Breast epithelium (tissue), 4 donors: ENCODE measurements at regions of chr14 and their contacts with region 1.

Region 1: DNA sequence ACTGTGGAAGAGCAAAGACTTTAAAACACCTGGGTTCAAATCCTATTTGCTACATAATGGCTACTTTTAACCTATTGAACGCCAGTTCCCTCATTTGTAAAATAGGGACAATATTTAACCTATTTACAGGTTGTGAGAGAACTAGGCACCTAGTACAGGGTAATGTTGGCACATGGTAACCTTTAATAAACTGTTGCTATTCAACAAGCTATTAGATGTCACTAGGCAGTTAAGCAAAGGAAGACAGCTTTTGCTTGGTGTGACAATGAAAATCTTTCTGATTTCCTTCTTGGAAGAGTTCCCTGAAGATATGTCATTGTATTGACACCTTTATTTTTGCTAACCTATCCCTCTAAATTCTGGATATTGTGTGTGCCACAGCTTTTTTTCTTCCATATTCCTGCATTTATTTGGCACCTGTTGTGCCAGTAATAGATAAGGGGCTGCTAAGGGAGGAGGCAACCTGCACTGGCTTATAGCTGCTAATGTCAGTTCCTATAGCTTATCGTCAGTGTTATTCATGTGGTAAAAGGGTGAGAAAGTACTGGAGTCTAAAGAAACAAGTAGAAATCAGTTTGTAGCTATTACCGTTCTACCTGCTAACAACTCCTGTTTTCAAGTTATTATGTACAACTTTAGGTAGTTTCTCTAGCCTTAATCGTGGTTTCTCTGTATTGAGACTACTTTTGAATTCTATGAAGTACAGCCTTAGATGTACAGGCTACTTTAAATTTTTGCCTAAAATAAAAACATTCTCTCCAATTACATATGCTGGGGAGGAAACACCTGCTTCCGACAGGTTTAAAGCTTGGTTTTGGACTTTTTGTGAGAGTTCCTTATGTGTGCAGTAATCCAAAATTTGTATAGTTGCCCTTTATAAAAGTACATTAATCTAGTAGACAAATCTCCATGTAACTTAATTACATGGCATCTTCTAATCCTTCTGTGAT is 24.3 kb downstream of the HIF1A start:
- DNase-seq: no peak
- H3K4me3 ChIP-seq: no peak overlapping the region
- H3K27ac ChIP-seq: no peak overlapping the region
- H3K4me1 ChIP-seq: no peaks in the 10 kb centered on the region
- H3K27me3 ChIP-seq: no peaks in the 10 kb centered on the region
- CTCF ChIP-seq: no peak
- POLR2A ChIP-seq: no peak

Region 2: GRCh38 chr14:60266021-60266937 is 1453.3 kb before region 1 on chr14:
- intact Hi-C with region 1: loop called (anchors 10 kb)
- DNase-seq: no peak
- H3K4me3 ChIP-seq: no peak overlapping the region
- H3K27ac ChIP-seq: no peak overlapping the region
- H3K4me1 ChIP-seq: no peaks in the 10 kb centered on the region
- H3K27me3 ChIP-seq: no peaks in the 10 kb centered on the region
- CTCF ChIP-seq: no peak
- POLR2A ChIP-seq: no peak

Region 3: GRCh38 chr14:60775296-60775695 is 944.3 kb before region 1 on chr14:
- intact Hi-C with region 1: no loop called
- DNase-seq: no peak
- H3K4me3 ChIP-seq: no peak overlapping the region
- H3K27ac ChIP-seq: no peak overlapping the region
- H3K4me1 ChIP-seq: peaks cover 0 to 3% of the 10 kb centered on the region in 2 donors
- H3K27me3 ChIP-seq: no peaks in the 10 kb centered on the region
- CTCF ChIP-seq: no peak
- POLR2A ChIP-seq: no peak